Ascending aorta (tissue), 2 donors: ENCODE measurements at regions of chr17 and their contacts with region 1.

Region 1: GRCh38 chr17:50372758-50373556 is at the starts of genes EME1 and MRPL27:
- DNase-seq: peak; percentile 30 to 89
- H3K4me3 ChIP-seq: peak within 1 kb of the TSS; percentile 68 to 78
- H3K27ac ChIP-seq: peak within 1 kb of the TSS; percentile 85 to 96
- H3K4me1 ChIP-seq: peaks cover 0 to 12% of the 10 kb centered on the region in 2 donors
- H3K27me3 ChIP-seq: no peaks in the 10 kb centered on the region
- CTCF ChIP-seq: no peak
- total RNA-seq, gene EME1: not detected
- total RNA-seq, gene MRPL27: 28.9 TPM

Region 2: GRCh38 chr17:50345432-50346312 is 27.3 kb before region 1 on chr17 and contains the start of gene XYLT2:
- intact Hi-C with region 1: loop called (anchors 2 kb)
- DNase-seq: peak; percentile 19 to 91
- H3K4me3 ChIP-seq: peak within 1 kb of the TSS; percentile 83 to 98
- H3K27ac ChIP-seq: peak within 1 kb of the TSS in 1 of 2 donors; percentile 35
- H3K4me1 ChIP-seq: peaks cover 7 to 15% of the 10 kb centered on the region in 2 donors
- H3K27me3 ChIP-seq: no peaks in the 10 kb centered on the region
- CTCF ChIP-seq: no peak
- total RNA-seq, gene XYLT2: 51.3 TPM

Region 3: GRCh38 chr17:50397111-50397918 is 24.4 kb after region 1 on chr17 and contains the start of gene LRRC59:
- intact Hi-C with region 1: loop called (anchors 1 kb)
- DNase-seq: peak; percentile 36 to 94
- H3K4me3 ChIP-seq: peak within 1 kb of the TSS; percentile 93 to 98
- H3K27ac ChIP-seq: peak within 1 kb of the TSS; percentile 71 to 91
- H3K4me1 ChIP-seq: peaks cover 3 to 21% of the 10 kb centered on the region in 2 donors
- H3K27me3 ChIP-seq: no peaks in the 10 kb centered on the region
- CTCF ChIP-seq: peak; percentile 91 to 99 (median 97)
- total RNA-seq, gene LRRC59: 91.9 TPM

Region 4: DNA sequence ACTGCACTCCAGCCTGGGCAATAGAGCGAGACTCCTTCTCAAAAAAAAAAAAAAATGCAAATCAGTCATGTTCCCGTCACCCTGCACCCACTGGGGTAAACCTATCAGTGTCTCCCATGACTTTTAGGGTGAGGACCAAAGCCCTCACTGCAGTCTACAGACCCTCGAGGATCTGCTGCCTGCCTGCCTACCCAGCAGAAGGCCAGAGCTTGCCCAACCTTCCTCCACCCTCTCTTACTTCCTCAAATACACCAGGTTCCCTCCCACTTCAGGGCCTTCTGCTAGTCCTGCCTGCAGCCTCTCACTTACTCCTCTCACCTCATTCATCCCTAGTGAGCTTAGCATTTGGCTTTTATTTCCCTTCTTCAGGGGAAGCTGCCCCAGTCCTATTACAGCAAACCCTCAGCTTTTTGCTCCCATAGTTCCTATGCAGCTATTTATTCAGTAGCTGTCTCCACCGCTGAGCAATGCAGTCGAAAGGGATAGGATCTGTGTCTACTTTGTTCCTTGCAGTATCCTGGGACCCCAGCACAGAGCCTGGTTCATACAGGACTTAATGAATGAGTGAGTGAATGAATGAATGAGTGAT is 511.0 kb after region 1 on chr17:
- intact Hi-C with region 1: no loop called
- DNase-seq: peak in 1 of 2 donors; percentile 59
- H3K4me3 ChIP-seq: no peak overlapping the region
- H3K27ac ChIP-seq: no peak overlapping the region
- H3K4me1 ChIP-seq: no peaks in the 10 kb centered on the region
- H3K27me3 ChIP-seq: no peaks in the 10 kb centered on the region
- CTCF ChIP-seq: no peak